GM12878 (cell line): ENCODE measurements at regions of chr9 and their contacts with region 1.

Region 1: DNA sequence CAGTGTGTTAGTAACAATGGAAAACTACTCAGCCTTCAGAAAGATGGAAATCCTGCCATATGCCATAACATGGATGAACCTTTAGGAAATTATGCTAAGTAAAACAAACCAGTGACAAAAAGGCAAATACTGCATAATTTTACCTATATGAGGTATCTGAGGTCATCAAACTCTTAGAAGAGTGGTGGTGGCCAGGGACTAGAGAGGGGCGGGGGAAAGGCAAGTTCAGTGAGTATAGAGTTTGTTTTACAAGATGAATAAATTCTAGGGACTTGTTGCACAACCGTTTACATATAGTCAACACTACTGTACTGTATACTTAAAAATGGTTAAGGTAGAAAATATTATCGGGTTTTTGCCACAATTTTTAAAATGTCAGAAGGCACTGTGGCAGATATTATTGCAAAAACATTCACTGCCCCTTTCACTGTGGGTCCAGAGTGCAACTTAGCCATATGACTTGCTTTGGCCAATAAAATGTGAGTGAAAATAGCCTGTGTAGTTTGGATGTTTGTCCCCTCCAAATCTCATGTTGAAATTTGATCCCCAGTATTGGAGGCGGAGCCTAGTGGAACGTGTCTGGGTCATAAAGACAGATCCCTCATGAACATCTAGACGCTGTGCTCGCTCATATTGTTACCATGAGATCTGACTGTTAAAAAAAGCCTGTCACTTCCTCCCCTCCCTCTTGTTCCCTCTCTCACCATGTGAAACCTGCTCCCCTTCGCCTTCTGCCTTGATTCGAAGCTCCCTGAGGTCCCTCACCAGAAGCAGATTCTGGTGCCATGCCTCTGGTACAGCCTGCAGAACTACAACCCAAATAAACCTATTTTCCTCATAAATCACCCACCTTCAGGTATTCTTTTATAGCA is 9.5 kb downstream of the ZNF367 start:
- DNase-seq: no peak
- ATAC-seq: no peak
- H3K4me3 ChIP-seq: no peak overlapping the region
- H3K27ac ChIP-seq: no peak overlapping the region
- H3K4me1 ChIP-seq: peaks cover 14% of the 10 kb centered on the region
- H3K27me3 ChIP-seq: no peaks in the 10 kb centered on the region
- CTCF ChIP-seq: no peak
- EP300 ChIP-seq: no peak
- POLR2A ChIP-seq: no peak
- RAD21 ChIP-seq: no peak

Region 2: DNA sequence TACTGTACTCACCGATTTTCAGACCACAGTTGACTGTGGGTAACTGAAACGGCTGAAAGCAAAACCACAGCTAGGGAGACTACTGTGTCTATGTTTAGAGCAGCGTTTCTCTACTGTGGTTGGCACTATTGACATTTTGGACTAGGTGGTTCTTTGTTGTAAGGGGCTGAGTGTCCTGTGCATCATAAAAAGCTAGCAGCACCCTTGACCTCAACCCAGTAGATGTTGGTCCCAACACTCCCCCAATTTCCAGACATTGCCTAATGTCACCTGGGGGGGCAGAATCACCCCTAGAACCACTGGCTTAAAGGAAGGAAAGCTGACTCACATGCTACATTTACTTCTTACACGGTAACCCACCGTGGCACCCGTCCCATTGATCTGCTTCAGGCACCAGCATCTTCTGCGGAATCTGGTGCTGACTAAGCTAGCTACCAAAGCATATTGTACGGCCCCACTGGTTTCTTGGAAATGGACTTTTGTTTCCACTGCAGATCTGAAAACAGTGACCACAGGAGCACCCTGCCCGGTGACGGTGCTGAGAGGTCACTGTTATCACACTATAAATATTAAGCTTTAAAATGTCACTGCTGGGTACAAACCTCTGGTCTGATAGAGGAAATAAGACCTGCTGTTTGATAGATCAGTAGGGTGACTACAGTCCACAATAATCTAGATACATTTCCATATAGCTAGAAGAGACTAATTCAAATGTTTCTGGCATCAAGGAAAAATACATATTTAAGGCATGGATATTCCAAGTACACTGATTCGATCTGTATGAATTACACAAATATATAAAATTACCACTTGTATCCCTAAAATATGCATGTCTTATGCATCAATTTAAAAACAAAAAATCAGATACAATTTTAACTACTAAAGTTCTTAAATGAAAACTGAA is 258.1 kb before region 1 on chr9:
- CTCF ChIA-PET with region 1: no interaction called
- POLR2A ChIA-PET with region 1: no interaction called
- RAD21 ChIA-PET with region 1: no interaction called
- SMC1A ChIA-PET with region 1: no interaction called
- in situ Hi-C with region 1: no loop called
- intact Hi-C with region 1: no loop called
- DNase-seq: peak; percentile 57
- ATAC-seq: peak; percentile 93
- H3K4me3 ChIP-seq: peak overlapping the region; percentile 49
- H3K27ac ChIP-seq: peak overlapping the region; percentile 4; the same call in 1 of the 2 replicates
- H3K4me1 ChIP-seq: peaks cover 30% of the 10 kb centered on the region
- H3K27me3 ChIP-seq: 0 out of 4 replicates have a peak, but pooled peaks cover 0 to 4% of the 10 kb centered on the region in 2 experiments
- CTCF ChIP-seq: no peak
- EP300 ChIP-seq: 0 out of 4 replicates have a peak, but pooled peaks have one; percentile 12 to 32
- POLR2A ChIP-seq: no peak
- RAD21 ChIP-seq: no peak

Region 3: GRCh38 chr9:96199006-96199405 is 209.6 kb before region 1 on chr9:
- CTCF ChIA-PET with region 1: no interaction called
- POLR2A ChIA-PET with region 1: no interaction called
- RAD21 ChIA-PET with region 1: no interaction called
- SMC1A ChIA-PET with region 1: no interaction called
- in situ Hi-C with region 1: no loop called
- intact Hi-C with region 1: no loop called
- DNase-seq: no peak
- ATAC-seq: no peak
- H3K4me3 ChIP-seq: no peak overlapping the region
- H3K27ac ChIP-seq: no peak overlapping the region
- H3K4me1 ChIP-seq: no peaks in the 10 kb centered on the region
- H3K27me3 ChIP-seq: no peaks in the 10 kb centered on the region; a peak in 2 of 4 replicates
- CTCF ChIP-seq: no peak
- EP300 ChIP-seq: no peak
- POLR2A ChIP-seq: no peak
- RAD21 ChIP-seq: no peak

Region 4: DNA sequence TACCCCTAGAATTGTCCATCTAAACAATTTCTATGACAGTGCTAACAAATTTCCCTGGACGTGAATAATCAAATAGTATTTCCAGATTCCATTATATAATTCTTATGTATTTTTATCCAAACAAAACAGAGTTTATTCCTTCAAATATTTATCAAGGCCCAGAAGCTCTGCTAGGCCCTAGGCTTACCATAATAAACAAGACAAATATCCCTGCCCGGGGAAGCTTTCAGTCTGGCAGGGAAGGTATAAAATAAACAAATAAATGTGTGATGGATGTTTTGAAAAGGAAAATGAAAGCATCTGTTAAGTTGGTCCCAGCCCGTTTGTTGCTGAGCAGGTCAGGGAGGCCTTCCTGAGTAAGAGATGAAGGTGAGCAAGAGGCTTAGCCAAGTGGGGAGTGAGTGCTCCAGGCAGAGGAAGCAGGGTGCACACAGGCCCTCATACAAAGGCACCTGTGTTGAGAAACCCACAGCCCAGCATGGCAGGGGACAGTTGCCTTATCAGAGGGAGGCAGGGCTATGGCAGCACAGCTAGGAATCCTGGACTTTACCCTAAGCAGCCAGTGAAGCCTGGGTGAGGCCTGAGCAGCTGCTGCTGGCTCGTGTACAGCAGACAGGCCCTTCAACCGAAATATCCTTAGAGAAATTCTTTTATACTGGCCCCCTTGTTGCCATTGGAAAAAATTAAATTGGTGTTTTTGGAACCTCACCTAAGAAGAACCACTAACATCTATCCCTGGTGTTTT is 17.5 kb before region 1 on chr9:
- CTCF ChIA-PET with region 1: interaction called, 4 read pairs
- POLR2A ChIA-PET with region 1: interaction called, 12 read pairs
- RAD21 ChIA-PET with region 1: no interaction called
- SMC1A ChIA-PET with region 1: interaction called, 5 read pairs
- in situ Hi-C with region 1: no loop called
- intact Hi-C with region 1: no loop called
- DNase-seq: no peak
- ATAC-seq: no peak
- H3K4me3 ChIP-seq: no peak overlapping the region
- H3K27ac ChIP-seq: no peak overlapping the region
- H3K4me1 ChIP-seq: no peaks in the 10 kb centered on the region
- H3K27me3 ChIP-seq: no peaks in the 10 kb centered on the region
- CTCF ChIP-seq: no peak
- EP300 ChIP-seq: no peak
- POLR2A ChIP-seq: no peak
- RAD21 ChIP-seq: no peak